SK-N-SH (cell line): ENCODE measurements at regions of chr9 and their contacts with region 1.

Region 1: GRCh38 chr9:134449221-134449894 is 123.1 kb downstream of the RXRA start:
- DNase-seq: peak; percentile 97
- H3K4me3 ChIP-seq: no peak overlapping the region; a peak in 1 of 4 replicates
- H3K27ac ChIP-seq: peak overlapping the region; percentile 36 to 48; a peak in 2 of 4 replicates
- H3K4me1 ChIP-seq: peaks cover 4 to 13% of the 10 kb centered on the region in 2 experiments; a peak in 2 of 4 replicates
- H3K27me3 ChIP-seq: no peaks in the 10 kb centered on the region
- CTCF ChIP-seq: peak; percentile 90
- EP300 ChIP-seq: no peak
- RAD21 ChIP-seq: peak; percentile 100

Region 2: DNA sequence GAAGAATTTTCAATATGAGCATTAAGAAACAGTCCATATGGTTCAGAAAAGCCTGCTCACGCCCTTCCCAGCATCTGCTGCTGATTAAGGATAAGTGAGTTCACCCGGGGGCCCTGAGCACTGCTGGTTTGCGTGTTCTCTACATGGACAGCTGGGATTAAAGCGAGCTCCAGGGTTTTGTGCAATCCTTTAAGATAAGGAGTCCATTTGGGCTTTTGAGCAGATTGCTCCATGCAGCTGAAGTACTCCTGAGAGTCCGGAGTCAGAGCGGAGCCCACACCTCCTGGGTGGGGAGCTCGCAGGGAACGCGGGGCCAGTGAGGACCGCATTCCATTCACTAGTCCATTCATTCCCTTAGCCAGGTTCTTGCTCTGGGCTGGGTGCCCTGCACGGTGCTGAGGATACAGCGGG is 42.9 kb after region 1 on chr9:
- CTCF ChIA-PET with region 1: interaction called, 15 read pairs
- POLR2A ChIA-PET with region 1: no interaction called
- DNase-seq: peak; percentile 90
- H3K4me3 ChIP-seq: no peak overlapping the region
- H3K27ac ChIP-seq: peak overlapping the region in 1 of 2 experiments; percentile 23; a peak in 1 of 4 replicates
- H3K4me1 ChIP-seq: peaks cover 4 to 30% of the 10 kb centered on the region in 2 experiments; a peak in 2 of 4 replicates
- H3K27me3 ChIP-seq: no peaks in the 10 kb centered on the region
- CTCF ChIP-seq: no peak
- EP300 ChIP-seq: peak in 1 of 2 experiments; percentile 62; a peak in 1 of 4 replicates
- RAD21 ChIP-seq: no peak

Region 3: DNA sequence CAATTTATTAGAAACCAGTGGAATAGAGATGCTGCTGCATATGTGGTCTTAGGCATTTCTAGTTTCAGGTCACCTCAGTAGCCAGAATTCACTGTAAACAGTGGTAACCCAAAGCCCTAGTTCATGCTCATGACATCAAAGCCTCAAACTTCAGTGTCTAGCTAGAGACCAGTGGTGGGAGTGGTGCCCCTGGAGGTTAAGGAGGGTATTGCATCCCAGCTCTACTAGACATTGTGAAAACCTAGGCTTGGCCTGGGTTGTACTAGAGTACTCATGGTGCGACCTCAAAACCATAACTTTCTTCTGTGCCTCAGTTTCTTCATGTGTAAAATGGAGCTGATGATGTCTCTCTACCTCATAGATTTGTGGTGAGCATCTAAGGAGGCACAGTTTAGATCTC is 211.0 kb after region 1 on chr9:
- CTCF ChIA-PET with region 1: interaction called, 18 read pairs
- POLR2A ChIA-PET with region 1: no interaction called
- DNase-seq: no peak
- H3K4me3 ChIP-seq: no peak overlapping the region
- H3K27ac ChIP-seq: peak overlapping the region; percentile 92 to 97; a peak in 3 of 4 replicates
- H3K4me1 ChIP-seq: peaks cover 26 to 40% of the 10 kb centered on the region in 2 experiments
- H3K27me3 ChIP-seq: no peaks in the 10 kb centered on the region
- CTCF ChIP-seq: peak; percentile 73
- EP300 ChIP-seq: no peak
- RAD21 ChIP-seq: no peak

Region 4: GRCh38 chr9:134698587-134699342 is 249.4 kb after region 1 on chr9:
- CTCF ChIA-PET with region 1: interaction called, 36 read pairs
- POLR2A ChIA-PET with region 1: no interaction called
- DNase-seq: peak; percentile 91
- H3K4me3 ChIP-seq: peak overlapping the region in 1 of 2 experiments; percentile 51; a peak in 1 of 4 replicates
- H3K27ac ChIP-seq: no peak overlapping the region
- H3K4me1 ChIP-seq: peaks cover 0 to 6% of the 10 kb centered on the region in 2 experiments; a peak in 1 of 4 replicates
- H3K27me3 ChIP-seq: no peaks in the 10 kb centered on the region
- CTCF ChIP-seq: peak; percentile 82
- EP300 ChIP-seq: no peak
- RAD21 ChIP-seq: peak; percentile 95

Region 5: DNA sequence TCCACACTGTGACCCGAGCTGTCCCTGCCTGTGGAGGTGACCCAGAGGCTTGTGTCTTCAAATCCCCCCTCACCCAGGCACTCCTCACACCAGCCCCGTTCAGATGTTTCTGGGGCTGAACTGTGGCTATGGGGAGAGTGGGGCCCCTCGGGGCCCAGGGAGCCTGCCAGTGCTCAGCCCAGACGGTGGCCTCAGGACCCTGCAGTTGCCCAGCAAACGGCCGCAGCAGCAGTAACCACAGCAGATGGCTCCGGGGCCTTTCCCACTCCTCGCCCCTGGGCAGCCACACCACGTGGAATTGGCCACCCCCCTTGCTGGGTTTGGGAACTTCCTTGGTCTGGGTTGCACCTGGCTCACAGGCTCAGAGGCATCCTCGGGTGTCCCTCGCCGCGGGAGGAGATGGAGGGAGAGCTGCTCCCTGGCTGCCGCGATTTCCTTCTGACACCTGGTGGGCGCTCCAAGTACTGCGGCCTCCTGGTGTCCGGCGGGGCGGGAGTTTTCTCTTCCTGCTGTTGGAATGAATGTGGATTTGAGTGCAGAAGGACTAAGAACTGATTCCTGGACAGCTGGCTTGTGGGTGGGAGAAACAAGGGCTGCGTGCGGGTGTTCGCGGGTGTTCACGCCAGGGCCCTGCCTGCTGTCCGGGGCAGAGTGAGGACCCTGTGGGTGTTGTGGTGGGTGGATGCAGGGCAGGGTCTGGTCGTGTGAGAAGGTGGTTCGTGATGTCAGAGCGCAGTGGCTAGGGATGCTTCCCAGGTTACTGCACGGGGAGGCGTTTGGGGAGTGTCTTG is 289.7 kb after region 1 on chr9:
- CTCF ChIA-PET with region 1: interaction called, 78 read pairs
- POLR2A ChIA-PET with region 1: no interaction called
- DNase-seq: peak; percentile 94
- H3K4me3 ChIP-seq: no peak overlapping the region
- H3K27ac ChIP-seq: 0 out of 4 replicates have a peak overlapping the region, but pooled peaks of 1 of the 2 experiments have one; percentile 18
- H3K4me1 ChIP-seq: peaks cover 4 to 12% of the 10 kb centered on the region in 2 experiments; a peak in 2 of 4 replicates
- H3K27me3 ChIP-seq: no peaks in the 10 kb centered on the region
- CTCF ChIP-seq: peak; percentile 77
- EP300 ChIP-seq: no peak
- RAD21 ChIP-seq: peak; percentile 91

Region 6: GRCh38 chr9:135221951-135222631 is 772.7 kb after region 1 on chr9:
- CTCF ChIA-PET with region 1: no interaction called
- POLR2A ChIA-PET with region 1: no interaction called
- DNase-seq: peak; percentile 68
- H3K4me3 ChIP-seq: no peak overlapping the region
- H3K27ac ChIP-seq: no peak overlapping the region
- H3K4me1 ChIP-seq: peaks cover 0 to 46% of the 10 kb centered on the region in 2 experiments; a peak in 2 of 4 replicates
- H3K27me3 ChIP-seq: no peaks in the 10 kb centered on the region
- CTCF ChIP-seq: no peak
- EP300 ChIP-seq: no peak
- RAD21 ChIP-seq: no peak

Region 7: DNA sequence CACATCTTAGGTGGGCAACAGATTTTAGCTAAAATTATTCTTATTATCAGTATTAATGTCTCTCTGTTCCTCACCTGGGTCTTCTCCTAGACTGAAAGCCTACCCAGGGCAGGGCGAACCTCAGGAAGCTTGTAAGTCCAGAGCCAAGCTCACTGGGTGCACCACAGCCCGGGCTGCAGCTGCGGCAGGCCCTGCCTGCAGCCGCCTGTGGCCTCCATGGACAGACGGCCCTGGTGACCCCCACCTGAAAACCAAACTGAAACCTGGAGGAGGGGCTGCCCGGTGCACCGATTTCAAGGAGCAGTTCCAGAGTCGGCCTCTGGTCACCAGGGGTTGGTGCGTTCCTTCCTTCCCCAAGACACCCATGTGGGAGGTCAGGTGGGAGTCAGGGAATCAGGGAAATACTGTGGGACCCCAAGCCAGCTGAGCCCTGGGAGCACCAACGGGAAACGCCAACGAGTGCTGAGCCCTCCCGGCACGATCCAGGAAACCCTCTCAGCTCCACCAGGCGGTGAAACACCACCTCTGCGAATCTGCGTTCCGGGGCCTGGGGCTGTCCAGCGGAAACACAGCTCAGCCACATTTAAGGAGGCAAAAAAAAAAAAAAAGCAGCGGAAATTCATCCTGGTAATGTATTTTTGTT is 961.6 kb after region 1 on chr9:
- CTCF ChIA-PET with region 1: interaction called, 11 read pairs
- POLR2A ChIA-PET with region 1: no interaction called
- DNase-seq: peak; percentile 26
- H3K4me3 ChIP-seq: no peak overlapping the region
- H3K27ac ChIP-seq: no peak overlapping the region
- H3K4me1 ChIP-seq: no peaks in the 10 kb centered on the region; a peak in 1 of 4 replicates
- H3K27me3 ChIP-seq: no peaks in the 10 kb centered on the region
- CTCF ChIP-seq: no peak
- EP300 ChIP-seq: no peak
- RAD21 ChIP-seq: no peak